Motor neuron (in vitro differentiated cells): ENCODE measurements at regions of chr1 and their contacts with region 1.

Region 1: DNA sequence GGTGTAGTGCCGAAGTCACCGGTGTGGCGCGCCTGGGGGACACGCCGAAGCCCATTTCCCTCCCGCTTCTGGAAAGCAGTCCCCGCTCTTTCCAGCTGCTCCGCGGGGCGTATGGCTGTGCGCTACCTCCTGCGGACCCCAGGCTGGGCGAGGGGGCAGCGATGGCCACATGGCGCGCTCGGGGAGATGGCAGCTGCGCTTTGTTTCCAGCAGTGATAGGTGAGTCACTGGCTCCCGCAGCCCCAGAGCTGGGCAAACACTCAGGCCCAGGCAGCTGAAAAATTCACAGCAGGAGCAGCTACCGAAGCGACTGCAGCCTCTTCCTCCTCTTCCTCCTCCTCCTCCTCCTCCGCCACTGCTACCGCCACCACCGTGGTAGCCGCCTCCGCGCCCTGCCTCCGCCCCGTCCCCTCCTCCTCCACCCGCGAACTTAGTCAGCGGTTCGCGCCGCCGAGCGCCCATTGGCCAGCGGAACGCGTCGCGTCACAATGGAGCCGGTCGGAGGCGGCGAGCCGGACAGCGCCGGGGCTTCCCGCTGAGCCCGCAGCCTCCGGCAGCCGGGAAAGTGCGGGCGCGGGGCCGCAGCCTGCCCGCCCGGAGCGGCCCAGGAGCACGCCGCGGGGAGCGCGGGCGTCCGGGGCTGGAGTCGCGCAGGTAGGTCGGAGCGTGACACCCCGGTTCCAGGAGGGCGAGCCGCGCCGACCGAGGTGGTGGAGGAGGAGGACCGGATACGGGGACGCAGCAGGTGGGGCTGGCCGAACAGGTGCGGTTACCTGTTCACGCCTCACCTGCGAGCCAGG is at the start of gene LRRC8B:
- ATAC-seq: peak; percentile 90 to 98 (median 92)
- H3K4me3 ChIP-seq: peak within 1 kb of the TSS; percentile 76 to 92 (median 91)
- H3K27ac ChIP-seq: peak within 1 kb of the TSS; percentile 87 to 89
- H3K4me1 ChIP-seq: peaks cover 25% of the 10 kb centered on the region in 2 donors
- total RNA-seq, gene LRRC8B: 4.2 to 37.3 (median 16.5) TPM

Region 2: DNA sequence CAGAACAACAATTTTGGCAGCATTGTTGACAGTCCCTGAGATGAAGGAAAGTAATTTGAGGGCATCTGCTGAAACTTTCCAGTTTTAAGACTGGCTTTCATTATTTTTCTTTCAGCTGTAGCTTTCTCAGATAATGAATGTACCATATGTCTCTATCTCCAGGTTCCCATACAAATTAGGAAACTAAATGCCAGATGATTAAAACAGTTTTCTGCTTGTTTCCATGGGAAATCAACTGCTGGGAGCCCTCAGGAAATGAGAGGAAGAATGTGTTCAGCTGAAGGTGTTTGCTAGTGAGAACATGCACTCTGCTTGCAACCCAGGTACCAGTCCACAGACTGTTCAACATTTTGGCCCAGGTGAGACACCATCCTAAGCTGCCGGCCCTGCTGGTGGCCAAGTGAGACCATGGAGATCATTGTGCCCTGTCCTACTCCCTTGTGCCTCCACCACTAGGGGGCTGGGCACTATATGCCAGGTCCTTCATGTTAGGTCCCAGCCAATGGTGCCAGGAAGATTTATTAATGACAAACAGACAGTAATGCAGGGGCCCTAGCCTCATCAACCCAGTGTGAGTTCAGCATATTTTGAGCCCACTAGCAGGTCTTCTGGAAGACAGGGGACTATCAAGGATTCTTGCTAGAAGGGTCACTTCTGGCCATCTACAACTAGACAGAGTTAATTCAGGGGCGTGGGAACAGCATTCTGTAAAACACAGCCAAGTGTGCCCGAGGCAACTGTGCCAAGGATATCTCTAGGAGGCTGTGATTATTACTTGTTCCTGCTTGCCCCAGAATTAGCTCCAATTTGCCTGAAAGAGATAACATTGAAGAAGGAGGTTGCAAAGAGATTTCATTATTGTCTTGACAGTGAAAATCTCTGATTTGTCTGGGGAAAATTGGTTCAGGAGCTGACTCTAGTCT is 91.4 kb after region 1 on chr1:
- in situ Hi-C with region 1: loop called in 1 of 9 experiments (anchors 25 kb)
- ATAC-seq: peak in 1 of 8 experiments; percentile 55
- H3K4me3 ChIP-seq: no peak overlapping the region
- H3K27ac ChIP-seq: no peak overlapping the region
- H3K4me1 ChIP-seq: no peaks in the 10 kb centered on the region